SK-N-SH (cell line): ENCODE measurements at regions of chr19 and their contacts with region 1.

Region 1: DNA sequence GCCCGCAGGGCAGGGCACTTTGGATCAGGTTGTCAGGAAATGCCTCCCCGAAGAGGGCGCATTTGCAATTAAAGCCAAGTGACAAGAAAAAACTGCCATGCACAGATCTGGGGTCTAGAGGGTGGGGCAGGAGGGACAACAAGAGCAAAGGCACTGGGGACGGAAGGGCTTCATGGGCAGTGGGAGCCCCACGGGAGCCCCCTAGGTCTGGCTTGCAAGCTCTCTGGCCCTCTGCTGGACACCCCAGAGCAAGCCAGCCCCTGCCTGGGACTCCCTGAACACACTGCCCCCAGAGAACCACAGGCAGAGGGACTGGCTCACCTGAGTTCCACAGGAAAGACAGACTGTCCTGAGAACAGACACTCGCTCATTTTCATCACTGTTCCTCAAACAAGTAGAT is 30.2 kb upstream of the C19orf12 start:
- DNase-seq: peak; percentile 40
- H3K4me3 ChIP-seq: no peak overlapping the region
- H3K27ac ChIP-seq: no peak overlapping the region
- H3K4me1 ChIP-seq: no peaks in the 10 kb centered on the region
- H3K27me3 ChIP-seq: no peaks in the 10 kb centered on the region; the same call in 1 of the 2 replicates
- CTCF ChIP-seq: peak; percentile 29
- EP300 ChIP-seq: no peak
- RAD21 ChIP-seq: no peak

Region 2: DNA sequence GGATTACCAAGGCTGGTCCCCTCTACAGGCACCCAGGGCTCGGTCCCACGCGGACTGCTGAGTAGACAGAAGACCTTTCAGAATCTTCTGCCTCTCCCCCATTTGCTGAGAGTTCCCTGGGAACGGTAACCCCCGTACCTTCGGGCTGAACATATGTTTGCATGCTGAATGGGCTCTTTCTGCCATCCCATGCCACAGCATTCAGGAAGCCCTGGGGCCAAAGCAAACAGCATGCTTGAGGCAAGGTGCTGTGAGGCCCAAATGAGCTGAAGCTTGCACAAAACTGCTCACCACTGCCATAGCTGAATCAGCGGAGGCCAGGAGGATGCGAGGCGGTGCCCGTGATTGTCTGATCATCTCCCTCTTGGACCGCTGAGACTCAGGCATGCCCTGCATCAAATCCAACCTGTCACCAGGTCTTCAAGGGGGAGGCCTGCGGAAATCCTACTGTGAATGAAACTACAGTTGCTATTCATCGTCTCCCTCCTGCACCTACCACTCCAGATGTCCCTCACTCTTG is 13.9 kb before region 1 on chr19:
- CTCF ChIA-PET with region 1: interaction called, 40 read pairs
- POLR2A ChIA-PET with region 1: no interaction called
- DNase-seq: no peak
- H3K4me3 ChIP-seq: no peak overlapping the region
- H3K27ac ChIP-seq: no peak overlapping the region
- H3K4me1 ChIP-seq: no peaks in the 10 kb centered on the region
- H3K27me3 ChIP-seq: no peaks in the 10 kb centered on the region; the same call in 1 of the 2 replicates
- CTCF ChIP-seq: no peak
- EP300 ChIP-seq: no peak
- RAD21 ChIP-seq: no peak